Posterior cingulate gyrus (tissue), 11 donors: ENCODE measurements at regions of chr9 and their contacts with region 1.

Region 1: DNA sequence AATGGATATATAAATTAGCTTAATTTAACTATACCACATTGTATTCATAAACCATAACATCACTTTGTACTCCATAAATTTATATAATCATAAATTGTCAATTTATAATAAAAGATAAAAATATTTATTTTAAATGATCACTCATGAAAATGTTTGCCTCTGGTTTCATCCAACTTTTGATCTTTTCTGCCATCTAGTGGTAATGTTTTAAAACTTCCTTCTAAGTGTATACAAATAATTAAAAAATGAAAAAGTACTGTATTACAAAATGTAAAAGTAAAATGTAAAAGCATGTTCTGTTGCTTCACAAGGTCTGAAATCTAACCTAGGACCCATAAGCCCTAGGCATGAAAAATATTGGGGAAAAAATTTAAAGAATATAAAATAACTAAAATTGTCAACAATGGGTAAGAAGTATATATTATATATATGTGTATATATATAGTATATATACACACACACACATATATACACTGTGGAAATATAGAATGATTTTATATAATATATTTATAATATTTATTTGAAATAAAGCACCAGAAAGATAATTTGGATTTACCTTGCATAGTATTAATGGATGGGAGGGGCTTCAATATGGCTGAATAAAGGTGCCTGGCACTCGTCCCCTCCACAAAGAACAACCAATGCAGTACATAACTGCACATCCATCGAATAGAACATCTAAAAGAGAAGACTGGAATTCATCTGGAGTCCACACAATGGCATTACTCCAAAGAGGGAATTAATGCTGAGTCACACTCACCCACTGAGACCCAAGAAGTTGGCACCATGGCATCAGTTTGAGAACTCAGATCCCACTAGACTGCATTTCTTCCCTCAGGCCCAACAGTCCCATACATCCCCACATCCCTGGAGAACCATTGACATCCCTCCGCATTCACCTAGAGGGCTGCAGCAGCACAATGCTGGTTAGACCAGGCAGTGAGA is 32.5 kb downstream of the ANXA1 start:
- DNase-seq: no peak

Region 2: DNA sequence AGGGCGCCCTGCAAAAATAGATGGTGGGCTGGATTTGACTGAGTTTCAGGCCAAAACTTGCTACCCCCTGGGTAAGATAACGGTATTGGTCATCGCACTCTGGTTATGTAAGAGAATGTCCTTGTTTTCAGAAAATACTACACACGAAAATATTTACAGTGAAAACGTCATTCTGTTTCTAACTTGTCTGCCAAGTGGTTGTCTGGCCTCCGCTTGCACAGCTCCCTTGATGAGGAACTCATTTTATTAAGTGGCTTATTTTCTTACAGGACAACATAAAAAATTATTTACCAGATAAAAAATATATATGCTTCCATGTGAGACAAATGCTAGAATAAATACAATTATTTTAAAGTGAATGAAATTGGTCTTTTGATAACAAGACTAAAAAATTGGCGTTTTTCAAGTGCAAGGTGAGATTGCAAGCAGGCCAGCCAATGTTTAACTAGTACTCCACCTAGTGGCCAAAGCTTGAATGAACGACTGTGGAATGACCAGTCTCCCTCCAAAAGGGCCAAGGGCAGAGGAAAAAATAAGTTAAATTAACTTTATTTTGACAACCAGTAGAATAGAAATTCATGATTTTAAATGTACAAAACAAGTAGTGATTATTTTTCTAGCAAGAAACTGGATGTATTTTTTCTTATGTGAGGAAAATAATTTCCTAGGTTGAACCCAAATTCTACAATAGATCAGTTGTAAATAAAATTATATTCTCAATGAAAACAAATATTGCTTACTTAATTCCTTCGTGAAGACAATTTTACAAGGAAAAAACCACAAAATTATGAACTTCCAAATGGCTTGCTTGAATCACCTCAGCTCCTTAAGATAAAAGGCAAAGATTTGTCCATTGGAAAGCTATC is 912.3 kb before region 1 on chr9:
- intact Hi-C with region 1: loop called (anchors 10 kb)
- DNase-seq: peak in 4 of 10 donors; percentile 30 to 54 (median 46)

Region 3: GRCh38 chr9:72856972-72857623 is 327.1 kb before region 1 on chr9:
- intact Hi-C with region 1: loop called (anchors 5 kb)
- DNase-seq: peak in 1 of 10 donors; percentile 20

Region 4: DNA sequence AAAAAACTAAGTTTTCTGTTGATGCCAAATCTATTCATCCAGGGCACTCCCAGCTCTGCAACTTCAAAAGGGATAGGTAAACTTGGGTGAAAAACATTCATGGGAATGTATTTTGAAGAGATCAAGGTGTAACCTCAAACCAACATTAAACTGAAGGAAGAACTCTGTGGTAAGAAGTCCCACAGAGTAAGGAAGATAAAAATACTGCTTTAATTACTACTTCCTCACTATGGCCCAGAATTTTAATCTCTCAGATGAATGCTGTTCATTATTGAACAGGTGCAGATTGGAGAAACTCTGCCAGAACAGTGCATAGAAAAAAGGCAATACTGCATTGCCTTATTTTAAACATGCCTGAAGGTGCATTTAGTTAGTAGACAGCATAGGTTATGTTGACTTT is 70.1 kb before region 1 on chr9:
- intact Hi-C with region 1: loop called (anchors 2 kb)
- DNase-seq: no peak